Sigmoid colon (tissue), 7 donors: ENCODE measurements at regions of chr2 and their contacts with region 1.

Region 1: GRCh38 chr2:237378650-237379049 is 35.3 kb downstream of the COL6A3 start:
- DNase-seq: peak; percentile 96
- H3K4me3 ChIP-seq: no peak overlapping the region
- H3K27ac ChIP-seq: peak overlapping the region in 3 of 4 donors; percentile 75 to 82 (median 80)
- H3K4me1 ChIP-seq: peaks cover 0 to 83% (median 54%) of the 10 kb centered on the region in 4 donors
- H3K27me3 ChIP-seq: no peaks in the 10 kb centered on the region
- CTCF ChIP-seq: no peak
- EP300 ChIP-seq: peak; percentile 77 to 90 (median 87)
- POLR2A ChIP-seq: no peak

Region 2: DNA sequence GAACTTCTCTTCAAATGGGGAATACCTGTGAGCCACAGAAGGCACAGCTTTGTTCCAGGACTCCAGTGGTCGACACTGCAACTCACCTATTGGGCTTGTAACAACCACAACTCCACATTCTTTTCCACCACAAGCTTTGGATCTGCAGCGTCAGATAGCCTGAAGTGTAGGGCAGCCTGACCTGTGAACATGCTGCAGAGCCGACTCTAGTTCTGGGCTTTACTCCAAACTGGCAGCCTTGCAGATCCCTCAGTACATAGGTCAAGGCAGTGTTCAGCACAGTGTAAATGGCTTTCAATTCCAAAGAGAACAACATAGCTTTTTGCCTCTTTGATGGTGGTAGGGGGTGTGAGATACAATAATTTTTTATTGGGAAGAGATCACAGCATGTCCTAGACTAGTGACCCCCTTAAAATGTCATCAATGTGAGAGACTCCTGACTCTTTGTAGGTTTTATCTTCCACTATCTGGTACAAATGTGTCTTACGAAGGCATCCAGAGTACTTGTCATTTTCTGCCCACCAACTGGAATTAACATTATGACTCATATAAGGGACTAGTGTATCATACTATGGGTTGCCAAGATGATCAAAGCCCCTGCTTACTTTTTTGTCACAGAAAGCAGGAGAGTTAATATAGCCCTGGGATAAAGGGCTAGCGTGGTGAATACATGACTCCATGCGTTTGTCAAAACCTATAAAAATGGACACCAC is 143.1 kb before region 1 on chr2:
- intact Hi-C with region 1: no loop called
- DNase-seq: peak; percentile 89
- H3K4me3 ChIP-seq: no peak overlapping the region
- H3K27ac ChIP-seq: peak overlapping the region; percentile 35 to 80 (median 78)
- H3K4me1 ChIP-seq: peaks cover 0 to 33% (median 27%) of the 10 kb centered on the region in 4 donors
- H3K27me3 ChIP-seq: no peaks in the 10 kb centered on the region
- CTCF ChIP-seq: no peak
- EP300 ChIP-seq: no peak
- POLR2A ChIP-seq: no peak

Region 3: GRCh38 chr2:237324405-237324831 is 54.2 kb before region 1 on chr2:
- intact Hi-C with region 1: loop called (anchors 2 kb)
- DNase-seq: no peak
- H3K4me3 ChIP-seq: no peak overlapping the region
- H3K27ac ChIP-seq: peak overlapping the region; percentile 91 to 98 (median 95)
- H3K4me1 ChIP-seq: peaks cover 0 to 100% (median 93%) of the 10 kb centered on the region in 4 donors
- H3K27me3 ChIP-seq: no peaks in the 10 kb centered on the region
- CTCF ChIP-seq: no peak
- EP300 ChIP-seq: no peak
- POLR2A ChIP-seq: no peak

Region 4: GRCh38 chr2:237547841-237548416 is 169.3 kb after region 1 on chr2:
- intact Hi-C with region 1: no loop called
- DNase-seq: no peak
- H3K4me3 ChIP-seq: no peak overlapping the region
- H3K27ac ChIP-seq: no peak overlapping the region
- H3K4me1 ChIP-seq: no peaks in the 10 kb centered on the region
- H3K27me3 ChIP-seq: no peaks in the 10 kb centered on the region
- CTCF ChIP-seq: no peak
- EP300 ChIP-seq: no peak
- POLR2A ChIP-seq: no peak